ENCODE measurements at regions of chr5 and their contacts with region 1.

Region 1: DNA sequence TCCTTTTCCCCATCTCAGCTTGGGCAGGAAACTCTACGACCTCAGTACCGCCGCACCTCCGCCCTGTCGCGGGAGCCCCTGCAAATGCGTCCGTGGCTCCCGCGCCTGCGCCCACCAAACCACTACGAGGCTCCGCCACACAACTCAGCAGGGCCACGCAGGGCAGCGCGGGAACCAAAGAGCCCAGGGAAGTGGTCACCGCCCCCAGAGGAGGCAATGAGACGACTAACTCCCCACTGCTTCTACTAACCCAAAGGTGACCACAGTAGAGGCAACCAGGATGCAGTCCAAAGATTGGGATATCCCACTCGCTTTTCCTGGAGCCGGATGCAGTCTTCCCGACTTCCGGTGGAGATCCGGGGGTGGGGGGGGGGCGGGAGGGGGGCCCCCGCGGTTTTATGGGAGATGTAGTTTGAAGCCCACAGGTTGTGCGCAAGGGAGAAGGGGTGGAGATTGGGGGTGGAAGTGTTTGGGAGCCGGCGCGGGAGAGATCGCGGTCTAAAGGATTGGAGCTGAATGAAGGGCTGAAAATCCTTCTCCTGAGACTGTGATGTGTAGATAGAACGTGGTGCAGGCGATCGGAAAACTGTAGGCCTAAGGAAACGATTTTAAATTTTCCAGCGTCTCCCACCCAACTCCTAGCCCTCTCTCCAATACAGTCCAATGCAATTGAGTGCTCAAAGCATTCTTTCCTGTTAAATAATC is at the start of gene NUDT12:
- DNase-seq: peak; percentile 46 to 69
- ATAC-seq: peak; percentile 93 to 94
- H3K4me3 ChIP-seq: peak within 1 kb of the TSS; percentile 71 to 96 (median 92)
- H3K27ac ChIP-seq: peak within 1 kb of the TSS; percentile 91 to 97 (median 94)
- H3K4me1 ChIP-seq: peaks cover 8 to 29% of the 10 kb centered on the region in 2 donors
- H3K27me3 ChIP-seq: no peaks in the 10 kb centered on the region
- CTCF ChIP-seq: no peak
- POLR2A ChIP-seq: peak; percentile 41 to 47
- total RNA-seq, gene NUDT12: 4.3 to 14.5 (median 11.6) TPM

Region 2: DNA sequence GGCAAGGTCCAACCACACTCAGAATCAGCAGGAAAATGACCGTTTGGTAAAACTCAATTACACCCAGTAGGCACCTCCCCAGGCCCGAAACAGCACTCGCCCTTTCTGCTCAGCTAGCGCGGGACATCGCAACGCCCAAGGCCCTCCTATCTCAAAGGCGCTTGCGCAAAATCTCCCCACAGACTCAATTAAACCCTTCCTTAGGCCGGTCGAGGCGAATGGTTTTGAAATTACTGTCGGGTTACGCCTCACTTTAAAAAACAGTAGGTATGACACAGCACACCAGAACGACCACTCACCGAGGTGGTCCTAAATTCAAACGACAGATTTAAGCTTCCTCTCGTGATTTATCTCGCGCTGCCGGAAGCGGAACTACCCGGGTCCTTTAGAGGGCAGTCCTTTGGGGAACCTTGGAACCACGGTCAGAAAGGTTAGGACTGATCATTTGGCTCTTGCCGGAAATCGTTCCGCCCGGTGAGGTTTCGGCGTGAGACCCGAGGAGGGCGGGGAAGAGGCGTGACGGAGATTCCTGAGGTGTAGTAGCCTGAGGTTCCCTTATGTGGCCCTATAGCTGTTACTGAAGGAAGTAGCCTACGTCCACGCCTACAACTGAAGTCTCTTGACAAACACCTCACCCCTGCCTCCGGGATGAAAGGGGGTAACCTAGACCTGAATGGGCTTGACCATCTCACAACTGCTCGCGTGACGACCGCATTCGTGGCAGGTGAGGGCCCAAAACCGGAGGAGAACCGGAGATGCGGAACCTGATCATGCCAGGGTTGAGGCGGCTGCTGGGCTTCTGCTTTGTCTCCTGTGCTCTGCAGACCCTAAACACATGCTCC is 442.6 kb before region 1 on chr5 and contains the starts of genes GIN1 and PPIP5K2:
- in situ Hi-C with region 1: no loop called
- intact Hi-C with region 1: loop called (anchors 2 kb)
- DNase-seq: peak; percentile 92 to 94
- ATAC-seq: peak; percentile 98 to 100
- H3K4me3 ChIP-seq: peak within 1 kb of the TSS; percentile 70 to 91 (median 86)
- H3K27ac ChIP-seq: peak within 1 kb of the TSS; percentile 86 to 96 (median 92)
- H3K4me1 ChIP-seq: peaks cover 28 to 30% of the 10 kb centered on the region in 2 donors
- H3K27me3 ChIP-seq: no peaks in the 10 kb centered on the region
- CTCF ChIP-seq: no peak
- POLR2A ChIP-seq: peak; percentile 46 to 53
- total RNA-seq, gene GIN1: 4.6 to 11.2 (median 6.9) TPM
- total RNA-seq, gene PPIP5K2: 3.5 to 7.0 (median 4.4) TPM

Region 3: GRCh38 chr5:103258368-103258956 is 304.1 kb before region 1 on chr5 and contains the start of gene MACIR:
- in situ Hi-C with region 1: no loop called
- intact Hi-C with region 1: loop called (anchors 2 kb)
- DNase-seq: peak; percentile 95 to 97
- ATAC-seq: peak; percentile 83 to 86
- H3K4me3 ChIP-seq: peak within 1 kb of the TSS; percentile 88 to 98 (median 93)
- H3K27ac ChIP-seq: peak within 1 kb of the TSS; percentile 81 to 95 (median 92)
- H3K4me1 ChIP-seq: peaks cover 41% of the 10 kb centered on the region in 2 donors
- H3K27me3 ChIP-seq: no peaks in the 10 kb centered on the region
- CTCF ChIP-seq: peak in 1 of 5 experiments; percentile 35
- POLR2A ChIP-seq: peak; percentile 63 to 80
- total RNA-seq, gene MACIR: 8.0 to 26.6 (median 21.7) TPM

Region 4: DNA sequence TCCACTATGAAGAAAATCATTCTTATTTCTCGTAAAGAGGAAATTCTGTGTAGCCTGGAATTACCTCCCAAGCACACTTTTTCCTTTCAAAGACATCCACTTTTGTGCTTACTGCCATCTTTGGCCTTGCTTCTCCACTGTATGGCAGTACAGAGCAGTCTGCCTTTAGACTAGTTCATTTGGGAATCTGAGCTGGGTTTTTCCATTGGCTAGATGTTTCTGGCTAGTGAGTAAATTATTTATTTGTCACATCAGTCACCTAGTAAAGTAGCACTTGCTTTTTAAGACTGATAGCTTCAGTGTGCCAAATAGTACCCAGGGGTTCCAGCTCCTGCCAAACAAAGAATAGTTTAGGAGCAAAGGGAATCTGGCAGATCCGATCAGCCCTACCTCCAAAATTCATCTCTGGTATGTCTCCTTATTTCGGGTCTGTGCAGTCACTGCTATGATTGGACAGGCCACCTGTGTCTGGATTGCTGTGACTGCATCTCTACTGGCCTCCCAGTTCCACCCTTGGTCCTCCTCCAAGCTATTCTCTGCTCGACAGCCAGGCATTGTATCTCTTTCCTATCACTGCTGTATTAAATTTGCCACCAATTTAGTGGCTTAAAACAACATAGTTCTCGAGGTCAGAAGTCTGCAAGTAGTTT is 97.6 kb before region 1 on chr5:
- in situ Hi-C with region 1: no loop called
- intact Hi-C with region 1: loop called (anchors 5 kb)
- DNase-seq: peak in 1 of 2 donors; percentile 33
- ATAC-seq: peak; percentile 71 to 86
- H3K4me3 ChIP-seq: no peak overlapping the region
- H3K27ac ChIP-seq: peak overlapping the region; percentile 56 to 74 (median 70)
- H3K4me1 ChIP-seq: peaks cover 27 to 28% of the 10 kb centered on the region in 2 donors
- H3K27me3 ChIP-seq: no peaks in the 10 kb centered on the region
- CTCF ChIP-seq: peak in 2 of 5 experiments; percentile 28 to 36
- POLR2A ChIP-seq: no peak

Region 5: DNA sequence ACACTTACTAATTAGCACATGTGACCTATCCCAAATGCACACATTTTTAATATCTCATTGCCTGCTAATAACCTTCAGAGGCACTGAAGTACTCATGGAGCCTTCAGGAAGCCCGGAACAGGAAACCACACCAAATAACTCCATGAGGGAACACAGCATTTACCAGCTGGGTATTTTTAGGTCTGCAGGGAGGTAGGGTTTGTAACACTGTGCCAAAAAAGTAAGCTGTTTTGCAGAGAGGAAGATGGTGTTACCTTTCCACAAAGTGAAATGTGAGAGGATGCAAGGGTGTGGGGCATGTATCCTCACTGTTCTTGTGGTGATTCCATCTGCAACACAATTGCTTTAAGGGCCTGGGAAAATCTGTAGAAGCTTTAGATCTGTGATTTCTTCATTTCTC is 64.4 kb before region 1 on chr5:
- in situ Hi-C with region 1: no loop called
- intact Hi-C with region 1: loop called (anchors 5 kb)
- DNase-seq: peak; percentile 57 to 58
- ATAC-seq: peak; percentile 98 to 99
- H3K4me3 ChIP-seq: peak overlapping the region in 3 of 4 donors; percentile 10 to 20 (median 14)
- H3K27ac ChIP-seq: peak overlapping the region; percentile 77 to 83 (median 77)
- H3K4me1 ChIP-seq: peaks cover 29 to 32% of the 10 kb centered on the region in 2 donors
- H3K27me3 ChIP-seq: no peaks in the 10 kb centered on the region
- CTCF ChIP-seq: no peak
- POLR2A ChIP-seq: no peak

Region 6: GRCh38 chr5:104062600-104063377 is 500.2 kb after region 1 on chr5:
- in situ Hi-C with region 1: no loop called
- intact Hi-C with region 1: no loop called
- DNase-seq: no peak
- ATAC-seq: no peak
- H3K4me3 ChIP-seq: no peak overlapping the region
- H3K27ac ChIP-seq: no peak overlapping the region
- H3K4me1 ChIP-seq: no peaks in the 10 kb centered on the region
- H3K27me3 ChIP-seq: no peaks in the 10 kb centered on the region
- CTCF ChIP-seq: no peak
- POLR2A ChIP-seq: no peak

Region 7: DNA sequence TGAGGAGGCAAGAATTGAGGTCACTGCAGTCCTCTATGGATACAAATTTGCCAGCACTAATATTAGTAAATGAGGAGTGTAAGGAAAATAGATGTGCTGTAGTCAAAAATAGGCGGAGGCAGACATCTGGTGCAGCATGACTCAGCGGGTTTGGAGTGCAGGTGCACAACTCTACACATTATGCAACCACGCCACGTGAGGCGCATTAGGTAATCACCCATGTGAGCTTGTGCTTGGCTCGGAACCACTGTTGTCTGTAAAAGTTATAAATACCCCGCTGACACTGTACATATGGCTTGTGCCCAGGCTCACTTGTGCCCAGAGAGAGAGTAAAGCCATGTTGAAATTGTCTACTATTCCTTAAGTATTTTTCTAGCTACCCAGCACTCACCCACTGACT is 623.5 kb after region 1 on chr5:
- in situ Hi-C with region 1: no loop called
- intact Hi-C with region 1: loop called (anchors 5 kb)
- DNase-seq: peak; percentile 76 to 96
- ATAC-seq: peak; percentile 90 to 95
- H3K4me3 ChIP-seq: no peak overlapping the region
- H3K27ac ChIP-seq: peak overlapping the region; percentile 68 to 84 (median 77)
- H3K4me1 ChIP-seq: peaks cover 9 to 11% of the 10 kb centered on the region in 2 donors
- H3K27me3 ChIP-seq: no peaks in the 10 kb centered on the region
- CTCF ChIP-seq: no peak
- POLR2A ChIP-seq: no peak

Measured in gastrocnemius medialis (tissue), 4 donors.